Ascending aorta (tissue), 2 donors: ENCODE measurements at regions of chrX and their contacts with region 1.

Region 1: DNA sequence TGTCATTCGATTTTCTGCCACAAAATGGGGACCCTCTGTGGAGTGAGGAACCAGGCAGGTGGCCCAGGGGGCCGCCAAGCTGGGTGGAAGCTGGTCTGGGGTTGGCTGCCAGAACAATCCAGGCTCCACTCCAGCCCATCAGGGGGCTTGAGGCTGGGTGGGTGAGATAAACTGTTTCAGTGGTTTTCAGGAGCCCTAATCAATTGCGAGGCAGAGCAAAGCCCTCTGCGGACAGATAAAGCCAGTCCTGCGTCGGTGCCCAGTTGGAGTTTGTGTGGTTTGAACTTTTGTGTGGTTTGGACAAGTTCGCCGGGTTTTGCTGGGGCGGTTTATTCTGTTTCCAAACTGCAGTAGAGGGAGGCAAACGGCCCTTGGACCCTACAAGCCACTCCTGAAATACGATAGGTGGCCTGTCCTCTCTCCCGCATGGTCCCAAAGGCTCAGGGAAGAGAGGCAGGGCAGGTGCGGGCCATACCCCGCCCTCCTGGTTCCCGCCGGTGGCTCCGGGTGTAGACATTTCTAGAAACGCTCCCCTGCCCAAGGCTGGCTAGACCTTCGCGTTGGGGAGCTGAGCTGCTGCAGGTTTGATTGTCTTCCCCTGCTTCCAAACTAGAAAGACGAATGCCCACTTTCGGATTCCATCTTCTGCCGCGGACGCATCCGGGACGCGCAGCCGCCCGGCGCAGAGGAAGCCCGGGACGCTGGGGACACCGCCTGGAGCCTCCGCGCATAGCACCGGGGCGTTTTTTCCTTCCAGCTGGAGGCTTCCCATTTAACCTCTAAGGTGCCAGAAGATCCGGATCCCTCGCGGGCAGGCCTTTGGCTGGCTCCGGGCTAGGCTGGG is 169.0 kb upstream of the BCOR start:
- DNase-seq: peak in 1 of 2 donors; percentile 79
- H3K4me3 ChIP-seq: peak overlapping the region; percentile 52 to 64
- H3K27ac ChIP-seq: peak overlapping the region; percentile 69 to 89
- H3K4me1 ChIP-seq: peaks cover 0 to 14% of the 10 kb centered on the region in 2 donors
- H3K27me3 ChIP-seq: no peaks in the 10 kb centered on the region
- CTCF ChIP-seq: peak; percentile 65 to 66 (median 66)

Region 2: DNA sequence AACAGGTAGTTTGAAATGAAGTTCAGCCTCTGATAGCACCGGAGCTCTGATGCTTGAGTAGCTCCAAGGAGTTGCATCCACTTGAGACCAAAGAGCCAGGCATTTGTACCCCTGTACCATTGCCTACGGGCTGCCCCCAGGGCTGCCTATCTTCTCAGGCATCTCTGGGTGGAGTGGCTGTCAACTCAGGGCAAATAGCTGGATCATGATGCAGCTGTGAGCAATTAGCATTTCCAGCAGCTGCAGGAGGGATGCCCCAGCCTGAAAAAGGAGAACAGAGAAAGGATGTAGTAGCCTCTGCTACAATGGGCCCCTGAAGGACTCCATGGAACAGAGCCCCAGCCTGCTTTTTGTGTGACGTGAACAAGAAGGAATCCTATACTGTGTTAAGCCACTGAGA is 661.5 kb before region 1 on chrX:
- intact Hi-C with region 1: loop called (anchors 10 kb)
- DNase-seq: no peak
- H3K4me3 ChIP-seq: no peak overlapping the region
- H3K27ac ChIP-seq: no peak overlapping the region
- H3K4me1 ChIP-seq: no peaks in the 10 kb centered on the region
- H3K27me3 ChIP-seq: no peaks in the 10 kb centered on the region
- CTCF ChIP-seq: no peak

Region 3: DNA sequence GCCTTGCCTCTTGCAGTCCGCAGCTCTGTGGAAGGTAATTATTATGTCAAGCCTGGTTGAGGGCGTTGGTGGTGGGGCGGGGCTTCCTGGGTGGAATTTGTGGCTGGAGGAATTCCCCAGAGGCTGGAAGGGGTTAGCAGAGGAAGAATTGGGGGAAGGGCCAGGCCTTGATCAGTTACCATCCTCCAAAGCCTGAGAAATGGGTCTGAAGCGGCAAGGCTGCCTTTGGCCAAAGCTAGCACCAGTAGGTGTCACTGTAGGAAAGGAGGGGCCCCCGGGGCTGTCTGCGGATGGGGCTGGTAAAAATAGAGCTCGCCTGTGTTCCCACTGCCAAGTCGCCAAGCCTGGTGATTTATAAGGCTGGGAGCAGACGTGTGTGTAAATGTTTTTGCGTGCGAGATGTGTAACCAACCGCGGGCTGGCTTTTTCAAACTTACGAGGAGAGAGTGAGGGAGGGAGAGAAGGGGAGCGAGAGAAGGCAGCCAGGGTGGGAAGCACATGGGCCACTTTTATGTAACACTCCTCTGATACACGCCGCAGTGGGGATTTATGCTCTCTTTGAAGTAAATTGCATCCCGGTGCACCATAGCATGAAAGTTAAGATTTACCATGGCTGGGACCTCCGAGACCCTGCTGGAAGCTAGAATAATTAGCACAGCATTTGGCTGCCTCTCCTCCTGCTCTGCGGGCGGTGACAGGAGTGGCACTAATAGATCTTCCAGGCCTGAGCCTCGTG is 535.9 kb before region 1 on chrX:
- intact Hi-C with region 1: loop called (anchors 2 kb)
- DNase-seq: peak; percentile 50 to 90
- H3K4me3 ChIP-seq: no peak overlapping the region
- H3K27ac ChIP-seq: peak overlapping the region; percentile 45 to 69
- H3K4me1 ChIP-seq: peaks cover 5 to 12% of the 10 kb centered on the region in 2 donors
- H3K27me3 ChIP-seq: no peaks in the 10 kb centered on the region
- CTCF ChIP-seq: peak; percentile 27 to 68 (median 56)

Region 4: GRCh38 chrX:39907964-39908616 is 358.6 kb before region 1 on chrX:
- intact Hi-C with region 1: loop called (anchors 1 kb)
- DNase-seq: peak; percentile 38 to 90
- H3K4me3 ChIP-seq: peak overlapping the region in 1 of 2 donors; percentile 47
- H3K27ac ChIP-seq: peak overlapping the region; percentile 48 to 72
- H3K4me1 ChIP-seq: peaks cover 4 to 15% of the 10 kb centered on the region in 2 donors
- H3K27me3 ChIP-seq: no peaks in the 10 kb centered on the region
- CTCF ChIP-seq: no peak

Region 5: DNA sequence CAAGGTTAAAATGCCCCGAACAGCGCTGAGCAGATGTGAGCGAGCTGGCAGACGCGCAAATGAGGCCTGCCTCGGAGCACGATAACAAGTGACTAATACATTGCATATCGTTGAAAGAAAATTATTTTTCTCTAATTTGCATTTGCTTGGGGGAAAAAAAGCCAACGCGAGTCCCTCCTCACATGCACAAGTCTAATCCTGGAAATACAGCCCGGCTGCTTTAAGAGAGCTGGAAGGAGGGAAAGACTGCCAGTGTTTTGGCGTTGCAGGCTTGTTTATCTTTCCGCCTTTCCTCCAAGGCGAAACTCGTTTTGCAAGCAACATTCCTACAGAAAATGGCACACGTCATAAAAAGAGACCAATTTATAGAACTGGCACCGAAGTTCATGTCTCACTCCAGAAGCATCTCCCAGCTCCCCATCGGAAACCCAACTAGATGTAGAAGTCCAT is 181.6 kb before region 1 on chrX:
- intact Hi-C with region 1: loop called (anchors 5 kb)
- DNase-seq: no peak
- H3K4me3 ChIP-seq: peak overlapping the region in 1 of 2 donors; percentile 63
- H3K27ac ChIP-seq: peak overlapping the region; percentile 44 to 69
- H3K4me1 ChIP-seq: peaks cover 0 to 24% of the 10 kb centered on the region in 2 donors
- H3K27me3 ChIP-seq: no peaks in the 10 kb centered on the region
- CTCF ChIP-seq: no peak

Region 6: GRCh38 chrX:40175511-40176350 is 91.0 kb before region 1 on chrX:
- intact Hi-C with region 1: loop called (anchors 1 kb)
- DNase-seq: peak in 1 of 2 donors; percentile 86
- H3K4me3 ChIP-seq: peak overlapping the region; percentile 59 to 75
- H3K27ac ChIP-seq: peak overlapping the region; percentile 89 to 93
- H3K4me1 ChIP-seq: peaks cover 3 to 14% of the 10 kb centered on the region in 2 donors
- H3K27me3 ChIP-seq: no peaks in the 10 kb centered on the region
- CTCF ChIP-seq: no peak